Panc1 (cell line): ENCODE measurements at regions of chr20 and their contacts with region 1.

Region 1: GRCh38 chr20:31684153-31685015 is 38.3 kb downstream of the BCL2L1 start:
- DNase-seq: no peak
- ATAC-seq: peak; percentile 42
- H3K4me3 ChIP-seq: no peak overlapping the region
- H3K27ac ChIP-seq: peak overlapping the region; percentile 31
- H3K4me1 ChIP-seq: peaks cover 31% of the 10 kb centered on the region
- H3K27me3 ChIP-seq: no peaks in the 10 kb centered on the region
- CTCF ChIP-seq: no peak

Region 2: DNA sequence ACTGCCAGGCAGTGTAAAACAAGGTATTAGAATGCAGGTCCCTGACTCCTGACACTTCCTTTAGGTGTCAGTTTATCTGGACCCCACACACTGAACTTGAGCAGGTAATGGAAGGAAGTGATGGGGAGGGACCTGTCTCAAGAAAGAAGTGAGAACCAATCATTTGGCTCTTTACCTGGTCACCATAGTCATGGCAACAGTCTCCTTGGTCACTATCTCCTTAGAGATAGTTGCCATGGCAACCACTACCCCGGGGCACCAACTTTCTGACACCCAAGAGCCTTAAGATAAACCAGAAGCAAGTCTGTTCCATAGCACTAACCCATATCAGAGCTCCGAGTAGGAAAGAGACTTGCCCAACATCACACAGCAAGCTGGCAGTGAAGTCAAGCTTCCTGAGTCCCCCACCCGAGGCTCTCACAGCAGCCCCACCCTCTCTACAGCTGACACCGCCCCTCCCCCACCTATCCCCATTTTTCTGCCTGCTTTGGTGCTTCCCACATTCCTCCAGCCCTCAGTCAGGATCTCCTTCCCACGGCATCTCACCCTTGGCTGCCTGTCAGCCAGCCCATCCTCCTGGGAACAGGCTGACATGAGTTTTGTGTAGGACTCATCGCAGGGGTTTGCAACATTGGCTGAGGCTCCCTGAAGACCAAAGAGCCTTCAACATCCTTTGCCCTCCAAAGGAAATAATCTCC is 186.4 kb before region 1 on chr20:
- CTCF ChIA-PET with region 1: no interaction called
- POLR2A ChIA-PET with region 1: no interaction called
- in situ Hi-C with region 1: no loop called
- intact Hi-C with region 1: no loop called
- DNase-seq: no peak
- ATAC-seq: no peak
- H3K4me3 ChIP-seq: no peak overlapping the region
- H3K27ac ChIP-seq: no peak overlapping the region
- H3K4me1 ChIP-seq: no peaks in the 10 kb centered on the region
- H3K27me3 ChIP-seq: peaks cover 4% of the 10 kb centered on the region; the same call in 1 of the 2 replicates
- CTCF ChIP-seq: no peak

Region 3: GRCh38 chr20:31618771-31619170 is 65.6 kb before region 1 on chr20:
- CTCF ChIA-PET with region 1: no interaction called
- POLR2A ChIA-PET with region 1: no interaction called
- in situ Hi-C with region 1: no loop called
- intact Hi-C with region 1: no loop called
- DNase-seq: no peak
- ATAC-seq: no peak
- H3K4me3 ChIP-seq: no peak overlapping the region
- H3K27ac ChIP-seq: no peak overlapping the region
- H3K4me1 ChIP-seq: no peaks in the 10 kb centered on the region
- H3K27me3 ChIP-seq: no peaks in the 10 kb centered on the region
- CTCF ChIP-seq: no peak

Region 4: DNA sequence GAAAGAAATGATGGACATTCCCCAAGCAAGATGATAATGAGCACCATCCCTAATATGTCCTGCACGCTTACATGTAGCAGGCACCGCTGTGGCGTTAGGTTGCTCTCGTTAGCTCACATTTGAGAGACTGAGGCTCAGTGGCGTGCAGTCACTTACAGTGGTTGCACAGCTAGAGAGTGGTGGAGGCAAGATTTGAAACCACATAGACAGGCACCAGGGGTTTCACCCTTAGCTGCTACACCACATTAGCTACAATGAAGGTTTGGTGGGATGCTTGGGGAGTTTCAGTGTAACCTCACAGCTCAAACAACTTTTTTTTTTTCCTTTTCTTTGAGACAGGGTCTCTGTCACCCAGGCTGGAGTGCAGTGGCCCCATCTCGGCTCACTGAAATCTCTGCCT is 43.0 kb before region 1 on chr20:
- CTCF ChIA-PET with region 1: no interaction called
- POLR2A ChIA-PET with region 1: no interaction called
- in situ Hi-C with region 1: no loop called
- intact Hi-C with region 1: no loop called
- DNase-seq: no peak
- ATAC-seq: no peak
- H3K4me3 ChIP-seq: no peak overlapping the region
- H3K27ac ChIP-seq: no peak overlapping the region
- H3K4me1 ChIP-seq: no peaks in the 10 kb centered on the region
- H3K27me3 ChIP-seq: no peaks in the 10 kb centered on the region
- CTCF ChIP-seq: no peak

Region 5: GRCh38 chr20:31652917-31653396 is 31.4 kb before region 1 on chr20:
- CTCF ChIA-PET with region 1: no interaction called
- POLR2A ChIA-PET with region 1: interaction called, 7 read pairs
- in situ Hi-C with region 1: loop called (anchors 5 kb)
- intact Hi-C with region 1: no loop called
- DNase-seq: no peak
- ATAC-seq: no peak
- H3K4me3 ChIP-seq: no peak overlapping the region
- H3K27ac ChIP-seq: no peak overlapping the region
- H3K4me1 ChIP-seq: no peaks in the 10 kb centered on the region
- H3K27me3 ChIP-seq: no peaks in the 10 kb centered on the region
- CTCF ChIP-seq: no peak

Region 6: GRCh38 chr20:31706607-31707257 is 22.3 kb after region 1 on chr20:
- CTCF ChIA-PET with region 1: no interaction called
- POLR2A ChIA-PET with region 1: interaction called, 16 read pairs
- in situ Hi-C with region 1: no loop called
- intact Hi-C with region 1: no loop called
- DNase-seq: no peak
- ATAC-seq: no peak
- H3K4me3 ChIP-seq: no peak overlapping the region
- H3K27ac ChIP-seq: peak overlapping the region; percentile 54
- H3K4me1 ChIP-seq: peaks cover 46% of the 10 kb centered on the region
- H3K27me3 ChIP-seq: no peaks in the 10 kb centered on the region
- CTCF ChIP-seq: no peak